GM23248 (cell line): ENCODE measurements at regions of chr3 and their contacts with region 1.

Region 1: DNA sequence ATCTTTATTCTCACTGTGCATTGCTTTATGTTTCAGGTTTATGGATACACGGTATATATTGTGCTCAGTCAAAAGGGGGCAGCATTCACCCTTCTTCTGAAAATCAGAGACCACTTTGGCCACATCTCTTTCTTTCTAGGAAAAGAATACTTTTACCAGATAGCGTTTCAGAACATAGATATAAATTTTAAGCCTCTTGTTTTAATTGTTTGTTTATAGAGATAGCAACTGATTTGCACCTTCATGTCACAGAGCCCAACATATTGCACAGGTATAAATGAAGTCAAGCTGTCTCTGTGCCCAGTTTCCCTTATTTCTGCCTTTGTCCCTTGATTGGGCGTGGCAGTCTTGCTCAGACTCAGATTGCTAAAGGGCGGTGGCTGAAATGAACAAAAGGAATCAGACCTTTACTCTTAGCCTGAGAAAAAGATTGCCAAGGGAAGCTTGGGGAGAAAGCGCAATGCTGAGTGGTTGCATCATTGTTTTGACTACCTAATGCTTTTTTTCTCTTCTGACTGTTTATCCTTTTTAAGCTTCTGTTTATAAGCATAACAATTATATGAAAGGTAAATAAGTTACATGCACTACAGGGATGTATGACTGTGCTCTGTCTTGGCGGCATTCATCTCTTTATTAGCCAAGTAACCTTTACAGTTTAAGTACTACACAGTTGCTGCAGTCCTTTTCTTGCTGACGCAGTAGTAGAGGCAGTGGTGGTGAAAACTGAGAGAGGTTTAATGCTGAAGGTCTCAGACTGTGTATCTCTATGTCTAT is 70.8 kb upstream of the ZBTB20 start:
- DNase-seq: peak; percentile 91
- H3K4me3 ChIP-seq: peak overlapping the region; percentile 43
- H3K27ac ChIP-seq: peak overlapping the region; percentile 74
- H3K4me1 ChIP-seq: peaks cover 23% of the 10 kb centered on the region
- H3K27me3 ChIP-seq: no peaks in the 10 kb centered on the region

Region 2: DNA sequence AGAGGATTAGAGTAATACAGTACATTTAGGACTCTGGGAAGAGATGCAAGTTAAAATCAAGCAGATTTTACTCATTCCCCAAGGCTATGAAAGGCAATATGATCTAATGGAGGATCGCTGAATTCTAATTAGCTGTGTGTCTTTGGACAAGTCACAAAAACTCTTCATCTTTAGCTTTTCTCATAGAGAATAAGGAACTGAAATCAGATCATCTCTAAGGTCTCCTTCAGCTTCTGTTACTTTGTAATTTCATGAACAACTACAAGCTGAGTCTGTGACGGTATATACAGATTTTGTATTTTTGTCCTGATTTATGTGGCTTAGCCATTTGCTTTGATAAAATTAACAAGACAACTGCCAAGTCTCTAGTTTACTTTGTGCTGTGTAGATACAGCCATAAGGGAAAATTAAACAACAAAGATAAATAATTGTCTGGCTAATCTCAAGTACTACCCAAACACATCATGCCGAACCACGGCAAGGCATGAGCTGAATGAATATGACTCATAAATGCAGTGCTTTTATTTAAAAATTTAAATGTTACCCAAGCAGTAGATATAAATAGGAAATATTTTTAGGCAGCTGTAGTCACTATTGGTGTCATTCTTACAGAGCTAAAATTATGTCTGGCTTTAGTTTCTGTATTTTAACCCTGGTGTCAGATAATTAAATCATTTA is 486.9 kb after region 1 on chr3:
- in situ Hi-C with region 1: loop called (anchors 5 kb)
- DNase-seq: peak; percentile 50
- H3K4me3 ChIP-seq: no peak overlapping the region
- H3K27ac ChIP-seq: no peak overlapping the region
- H3K4me1 ChIP-seq: peaks cover 3% of the 10 kb centered on the region
- H3K27me3 ChIP-seq: no peaks in the 10 kb centered on the region

Region 3: DNA sequence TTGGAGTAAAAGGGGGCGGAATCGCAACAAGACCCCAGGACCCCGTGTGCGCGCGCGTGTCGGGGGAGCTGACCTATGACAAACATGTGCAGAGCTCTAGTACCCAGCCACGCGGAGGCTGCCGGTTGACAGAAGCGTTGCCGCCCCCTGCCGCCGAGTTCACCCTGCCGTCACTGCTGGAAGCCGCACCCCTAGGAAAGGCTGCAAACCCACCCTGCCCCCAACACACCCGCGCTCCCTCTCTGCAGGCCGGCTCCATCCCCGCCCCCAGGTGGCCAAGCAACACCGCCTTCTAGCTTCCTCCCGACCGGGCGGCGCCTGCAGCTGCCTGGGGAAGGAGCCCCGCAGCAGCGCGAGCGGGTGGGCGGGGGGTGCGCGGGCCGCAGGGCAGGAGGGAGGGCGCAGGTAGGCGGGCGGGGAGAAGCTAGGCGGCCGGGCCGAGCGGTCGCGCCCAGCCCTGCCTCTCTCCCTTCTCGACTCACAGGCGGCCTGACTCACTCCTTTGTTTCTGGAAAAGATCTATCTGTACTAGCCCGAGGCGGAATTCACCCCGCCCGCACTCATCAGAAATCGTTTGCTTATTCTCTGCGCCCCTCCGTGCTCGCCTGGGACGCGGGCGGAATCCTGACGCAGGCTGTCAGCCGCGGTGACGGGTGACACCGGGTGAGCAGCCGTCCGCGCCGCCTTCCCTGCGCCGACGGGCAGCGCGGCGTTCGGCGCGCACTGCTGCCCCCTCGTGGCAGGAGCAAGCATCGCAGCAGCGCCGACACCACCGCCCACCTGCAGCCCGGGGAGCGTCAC is 566.3 kb after region 1 on chr3:
- in situ Hi-C with region 1: loop called (anchors 10 kb)
- DNase-seq: peak; percentile 98
- H3K4me3 ChIP-seq: peak overlapping the region; percentile 75
- H3K27ac ChIP-seq: peak overlapping the region; percentile 98
- H3K4me1 ChIP-seq: peaks cover 36% of the 10 kb centered on the region
- H3K27me3 ChIP-seq: no peaks in the 10 kb centered on the region